ENCODE measurements at regions of chr14 and their contacts with region 1.

Region 1: DNA sequence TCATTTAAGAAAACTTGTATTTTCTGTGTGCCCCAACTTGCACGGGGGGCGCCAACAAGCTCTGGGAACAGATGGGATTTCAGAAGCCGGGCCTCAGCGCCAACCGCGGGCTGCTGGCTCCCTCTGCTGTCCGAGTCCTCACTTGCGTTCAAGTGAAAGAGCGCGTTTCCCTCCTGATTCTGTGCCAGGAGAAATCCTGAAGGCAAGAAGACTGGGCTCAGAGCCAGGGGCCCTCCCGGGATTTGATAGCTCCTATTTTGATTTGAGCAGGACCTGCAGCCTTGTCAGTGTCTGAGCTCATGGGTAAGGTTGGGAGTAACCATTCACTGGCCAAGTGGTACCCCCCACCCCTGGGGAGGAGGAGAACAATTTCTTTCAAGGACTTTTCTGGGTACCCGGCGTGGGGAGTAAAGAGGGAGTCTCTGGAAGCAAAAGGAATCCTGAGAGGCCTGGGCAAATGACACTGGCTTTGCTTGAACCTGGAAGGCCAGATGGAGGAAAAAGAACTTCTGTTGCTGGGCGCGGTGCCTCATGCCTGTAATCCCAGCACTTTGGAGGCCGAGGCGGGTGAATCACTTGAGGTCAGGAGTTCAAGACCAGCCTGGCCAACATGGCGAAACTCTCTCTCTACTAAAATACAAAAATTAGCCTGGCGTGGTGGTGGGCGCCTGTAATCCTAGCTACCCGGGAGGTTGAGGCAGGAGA is 179.0 kb upstream of the RGS6 start:
- DNase-seq: peak; percentile 78 to 89 (median 84)
- H3K4me3 ChIP-seq: peak overlapping the region in 47 of 59 donors; percentile 3 to 64 (median 36)
- H3K27ac ChIP-seq: peak overlapping the region in 1 of 59 donors; percentile 10
- H3K27me3 ChIP-seq: no peaks in the 10 kb centered on the region
- CTCF ChIP-seq: peak; percentile 72 to 99 (median 97)

Region 2: DNA sequence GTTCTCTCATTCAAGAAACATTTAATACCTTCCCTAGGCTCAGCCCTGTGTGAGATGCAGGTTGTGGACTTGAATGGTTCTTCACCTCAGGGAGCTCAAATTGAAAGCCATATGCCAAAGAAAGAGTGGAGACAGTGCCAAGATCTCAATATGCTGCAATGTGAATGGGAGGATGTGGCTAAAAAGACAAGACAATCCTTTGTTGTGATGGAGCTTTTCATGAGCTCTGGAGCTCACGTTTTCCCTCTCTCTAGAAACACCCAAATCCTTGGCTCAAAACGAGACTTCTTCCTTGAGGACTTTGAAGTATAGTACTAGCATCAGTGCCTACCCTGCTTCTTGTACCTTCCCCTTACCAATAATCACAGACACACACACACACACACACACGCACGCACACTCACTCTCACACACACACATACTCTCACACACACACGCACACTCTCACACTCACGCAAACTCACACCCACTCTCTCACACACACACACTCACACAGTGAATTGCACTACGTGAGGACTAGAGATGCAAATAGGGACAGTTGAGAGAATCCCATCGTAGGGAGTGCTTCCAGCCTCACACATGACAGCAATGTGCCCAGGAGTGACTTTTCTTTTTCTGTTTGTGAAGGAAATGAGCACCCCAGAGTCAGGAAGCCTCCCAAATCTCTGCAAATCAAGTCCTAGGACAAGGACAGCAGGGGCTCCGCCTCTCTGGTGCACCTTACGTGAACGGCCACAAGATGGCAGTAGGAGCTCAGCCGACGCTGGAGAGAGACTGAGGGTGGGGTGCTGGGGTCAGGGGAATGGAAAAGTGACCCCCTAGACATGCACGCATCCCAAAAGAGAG is 614.6 kb before region 1 on chr14:
- intact Hi-C with region 1: loop called (anchors 1 to 2 kb)
- DNase-seq: peak; percentile 37 to 72 (median 53)
- H3K4me3 ChIP-seq: peak overlapping the region in 57 of 59 donors; percentile 6 to 63 (median 42)
- H3K27ac ChIP-seq: peak overlapping the region in 5 of 59 donors; percentile 3 to 59 (median 18)
- H3K27me3 ChIP-seq: no peaks in the 10 kb centered on the region
- CTCF ChIP-seq: peak; percentile 68 to 98 (median 94)